ENCODE measurements at regions of chr5 and their contacts with region 1.

Region 1: DNA sequence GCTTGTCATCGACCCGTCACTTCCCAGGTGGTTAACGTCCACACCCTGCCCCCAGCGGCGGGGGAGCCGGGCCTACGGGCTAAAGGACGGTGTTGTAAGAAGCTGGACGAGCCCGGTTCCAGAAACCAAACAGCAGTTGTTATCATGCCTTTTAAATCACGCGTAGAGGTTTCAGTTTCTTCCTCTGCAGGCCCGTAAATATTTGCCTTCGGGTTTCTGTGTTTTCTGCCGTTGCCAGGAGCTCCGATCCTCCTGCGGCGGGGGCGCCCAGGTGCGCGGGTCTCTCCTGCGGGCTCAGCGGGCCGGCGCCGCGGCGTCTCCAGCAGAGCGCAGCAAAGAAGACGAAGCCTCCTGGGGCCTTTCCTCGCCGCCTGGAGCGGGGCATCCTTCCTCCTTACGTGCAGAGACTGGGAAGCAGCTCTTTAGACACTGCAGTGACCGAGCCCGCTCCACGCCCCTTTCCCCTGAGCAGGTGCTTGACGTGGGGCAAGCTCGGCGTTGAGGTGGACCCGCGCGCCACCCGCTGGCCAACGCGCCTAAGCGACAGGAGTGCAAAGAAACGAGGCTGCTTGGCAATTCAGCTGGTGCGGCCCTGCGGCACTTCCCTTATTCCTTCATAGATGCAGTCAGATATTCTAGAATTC is 21.8 kb upstream of the TTC1 start:
- DNase-seq: peak; percentile 58
- H3K4me3 ChIP-seq: peak overlapping the region in 2 of 3 experiments; percentile 10 to 15
- H3K27ac ChIP-seq: no peak overlapping the region
- H3K4me1 ChIP-seq: peaks cover 2% of the 10 kb centered on the region
- H3K27me3 ChIP-seq: peaks cover 36 to 37% of the 10 kb centered on the region in 2 experiments
- CTCF ChIP-seq: peak; percentile 62 to 87
- POLR2A ChIP-seq: no peak

Region 2: DNA sequence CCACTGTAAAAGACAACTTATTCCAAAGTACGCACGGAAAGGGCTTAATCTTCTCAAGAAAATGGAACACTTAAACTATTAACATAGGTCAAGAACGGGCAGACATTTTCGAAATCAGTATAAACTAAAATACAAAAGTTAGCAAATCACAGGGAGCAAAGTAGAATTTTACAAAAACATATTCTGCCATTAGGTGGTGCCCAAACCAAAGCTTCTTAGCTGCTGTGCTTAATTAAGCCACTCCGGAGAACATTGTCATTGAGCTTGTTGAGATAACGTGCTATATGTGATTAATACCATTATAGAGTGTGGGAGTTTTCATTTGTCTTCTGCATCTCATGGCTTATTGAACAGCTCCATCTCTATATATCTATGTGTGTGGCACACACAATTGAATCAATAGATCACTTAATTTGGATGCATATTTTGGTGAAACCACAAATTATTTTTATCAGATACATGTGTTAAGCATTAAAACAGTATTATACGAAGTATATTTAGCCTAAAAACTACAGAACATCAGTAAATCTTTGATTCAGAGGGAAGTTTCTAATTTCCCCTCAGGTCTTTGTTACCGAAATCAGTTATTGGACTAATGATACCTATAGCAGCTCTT is 700.6 kb before region 1 on chr5:
- CTCF ChIA-PET with region 1: interaction called, 63 read pairs
- POLR2A ChIA-PET with region 1: no interaction called
- dilution Hi-C with region 1: no loop called
- intact Hi-C with region 1: loop called (anchors 1 kb)
- DNase-seq: peak; percentile 47
- H3K4me3 ChIP-seq: no peak overlapping the region
- H3K27ac ChIP-seq: no peak overlapping the region
- H3K4me1 ChIP-seq: no peaks in the 10 kb centered on the region
- H3K27me3 ChIP-seq: no peaks in the 10 kb centered on the region
- CTCF ChIP-seq: peak in 1 of 2 donors; percentile 31
- POLR2A ChIP-seq: no peak

Region 3: GRCh38 chr5:159331093-159331973 is 655.8 kb before region 1 on chr5:
- CTCF ChIA-PET with region 1: interaction called, 23 read pairs
- POLR2A ChIA-PET with region 1: no interaction called
- dilution Hi-C with region 1: no loop called
- intact Hi-C with region 1: loop called (anchors 1 kb)
- DNase-seq: peak; percentile 30
- H3K4me3 ChIP-seq: peak overlapping the region in 2 of 3 experiments; percentile 8 to 21
- H3K27ac ChIP-seq: no peak overlapping the region
- H3K4me1 ChIP-seq: peaks cover 3% of the 10 kb centered on the region
- H3K27me3 ChIP-seq: peaks cover 0 to 3% of the 10 kb centered on the region in 2 experiments
- CTCF ChIP-seq: peak; percentile 64 to 81
- POLR2A ChIP-seq: no peak

Region 4: DNA sequence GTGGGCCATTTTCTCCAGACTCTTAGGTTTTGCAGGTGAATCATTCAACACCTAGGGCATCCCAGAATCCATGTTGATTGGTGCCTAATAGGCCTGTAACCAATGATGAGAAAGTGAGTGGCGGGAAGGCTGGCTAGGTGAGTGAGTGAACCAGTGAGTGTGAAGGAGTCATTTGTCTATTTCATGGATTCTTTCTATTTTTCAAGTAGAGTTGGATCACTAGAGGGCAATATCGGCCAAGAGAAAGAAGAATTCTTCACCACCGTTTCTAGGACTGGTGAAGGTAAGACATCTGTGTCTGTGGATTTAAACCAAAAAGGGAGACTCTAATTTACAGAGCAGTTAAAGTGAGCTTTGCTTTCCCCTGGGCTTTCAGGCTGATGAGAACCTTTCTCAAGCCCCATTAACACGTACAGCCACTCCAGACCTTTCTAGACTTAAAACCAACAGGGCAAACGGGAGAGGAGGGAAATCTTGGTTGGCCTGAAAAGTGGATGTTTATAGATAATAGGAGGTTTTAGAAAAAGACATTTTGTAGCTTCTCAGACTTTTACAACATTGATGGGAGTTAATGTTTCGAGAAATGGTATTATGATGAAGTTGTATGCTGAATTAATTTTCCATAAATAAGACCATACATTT is 542.6 kb before region 1 on chr5:
- CTCF ChIA-PET with region 1: interaction called, 21 read pairs
- POLR2A ChIA-PET with region 1: no interaction called
- dilution Hi-C with region 1: no loop called
- intact Hi-C with region 1: loop called (anchors 1 kb)
- DNase-seq: peak; percentile 12
- H3K4me3 ChIP-seq: no peak overlapping the region
- H3K27ac ChIP-seq: no peak overlapping the region
- H3K4me1 ChIP-seq: no peaks in the 10 kb centered on the region
- H3K27me3 ChIP-seq: no peaks in the 10 kb centered on the region
- CTCF ChIP-seq: no peak
- POLR2A ChIP-seq: no peak

Region 5: GRCh38 chr5:159515909-159516415 is 471.2 kb before region 1 on chr5:
- CTCF ChIA-PET with region 1: interaction called, 11 read pairs
- POLR2A ChIA-PET with region 1: no interaction called
- dilution Hi-C with region 1: no loop called
- intact Hi-C with region 1: loop called (anchors 1 kb)
- DNase-seq: peak; percentile 30
- H3K4me3 ChIP-seq: no peak overlapping the region
- H3K27ac ChIP-seq: no peak overlapping the region
- H3K4me1 ChIP-seq: no peaks in the 10 kb centered on the region
- H3K27me3 ChIP-seq: no peaks in the 10 kb centered on the region
- CTCF ChIP-seq: peak; percentile 59
- POLR2A ChIP-seq: no peak

Region 6: GRCh38 chr5:159915904-159916840 is 71.0 kb before region 1 on chr5 and contains the start of gene ADRA1B:
- CTCF ChIA-PET with region 1: interaction called, 11 read pairs
- POLR2A ChIA-PET with region 1: no interaction called
- dilution Hi-C with region 1: no loop called
- intact Hi-C with region 1: no loop called
- DNase-seq: peak; percentile 42
- H3K4me3 ChIP-seq: peak within 1 kb of the TSS in 2 of 3 experiments; percentile 28 to 48
- H3K27ac ChIP-seq: no peak within 1 kb of the TSS
- H3K4me1 ChIP-seq: peaks cover 27% of the 10 kb centered on the region
- H3K27me3 ChIP-seq: peaks cover 4 to 10% of the 10 kb centered on the region in 2 experiments
- CTCF ChIP-seq: peak; percentile 19 to 55
- POLR2A ChIP-seq: no peak
- total RNA-seq, gene ADRA1B: 0.21 TPM in 1 of 2 replicates, not detected in the other

Region 7: GRCh38 chr5:159975462-159976019 is 11.6 kb before region 1 on chr5:
- CTCF ChIA-PET with region 1: interaction called, 15 read pairs
- POLR2A ChIA-PET with region 1: no interaction called
- dilution Hi-C with region 1: no loop called
- intact Hi-C with region 1: loop called (anchors 1 kb)
- DNase-seq: peak; percentile 64
- H3K4me3 ChIP-seq: no peak overlapping the region
- H3K27ac ChIP-seq: no peak overlapping the region
- H3K4me1 ChIP-seq: peaks cover 12% of the 10 kb centered on the region
- H3K27me3 ChIP-seq: peaks cover 17 to 32% of the 10 kb centered on the region in 2 experiments
- CTCF ChIP-seq: peak; percentile 32 to 40
- POLR2A ChIP-seq: no peak

Region 8: DNA sequence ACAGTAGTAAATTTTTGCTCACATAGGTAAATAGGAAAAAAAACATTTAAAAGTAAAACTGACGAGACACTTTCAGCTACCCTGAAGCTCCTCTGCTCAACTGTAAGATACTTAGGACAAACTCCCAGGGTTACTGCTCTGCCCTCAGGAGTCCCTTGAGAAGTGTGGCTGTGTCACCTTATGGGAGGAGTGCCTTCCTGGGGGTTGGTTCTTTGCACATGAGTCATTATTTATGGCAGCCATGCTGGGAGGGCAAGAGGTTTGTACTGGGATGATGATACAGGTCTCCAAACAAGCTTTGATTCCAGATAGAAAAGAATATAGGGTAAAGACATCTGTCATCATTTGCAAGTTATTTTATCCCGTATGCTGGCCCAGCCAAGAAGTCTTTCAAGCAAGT is 67.7 kb after region 1 on chr5:
- CTCF ChIA-PET with region 1: no interaction called
- POLR2A ChIA-PET with region 1: no interaction called
- dilution Hi-C with region 1: no loop called
- intact Hi-C with region 1: no loop called
- DNase-seq: no peak
- H3K4me3 ChIP-seq: no peak overlapping the region
- H3K27ac ChIP-seq: no peak overlapping the region
- H3K4me1 ChIP-seq: no peaks in the 10 kb centered on the region
- H3K27me3 ChIP-seq: no peaks in the 10 kb centered on the region
- CTCF ChIP-seq: no peak
- POLR2A ChIP-seq: no peak

Region 9: GRCh38 chr5:160188142-160189015 is 201.2 kb after region 1 on chr5:
- CTCF ChIA-PET with region 1: no interaction called
- POLR2A ChIA-PET with region 1: no interaction called
- dilution Hi-C with region 1: no loop called
- intact Hi-C with region 1: no loop called
- DNase-seq: peak; percentile 32
- H3K4me3 ChIP-seq: peak overlapping the region; percentile 5 to 47 (median 33)
- H3K27ac ChIP-seq: peak overlapping the region; percentile 44
- H3K4me1 ChIP-seq: peaks cover 8% of the 10 kb centered on the region
- H3K27me3 ChIP-seq: no peaks in the 10 kb centered on the region
- CTCF ChIP-seq: peak in 1 of 2 donors; percentile 3
- POLR2A ChIP-seq: no peak